ENCODE measurements at regions of chr1 and their contacts with region 1.

Region 1: GRCh38 chr1:51519048-51519864 is at the start of gene EPS15:
- DNase-seq: peak; percentile 95
- ATAC-seq: peak; percentile 85
- total RNA-seq, gene EPS15: 66.1 TPM

Region 2: DNA sequence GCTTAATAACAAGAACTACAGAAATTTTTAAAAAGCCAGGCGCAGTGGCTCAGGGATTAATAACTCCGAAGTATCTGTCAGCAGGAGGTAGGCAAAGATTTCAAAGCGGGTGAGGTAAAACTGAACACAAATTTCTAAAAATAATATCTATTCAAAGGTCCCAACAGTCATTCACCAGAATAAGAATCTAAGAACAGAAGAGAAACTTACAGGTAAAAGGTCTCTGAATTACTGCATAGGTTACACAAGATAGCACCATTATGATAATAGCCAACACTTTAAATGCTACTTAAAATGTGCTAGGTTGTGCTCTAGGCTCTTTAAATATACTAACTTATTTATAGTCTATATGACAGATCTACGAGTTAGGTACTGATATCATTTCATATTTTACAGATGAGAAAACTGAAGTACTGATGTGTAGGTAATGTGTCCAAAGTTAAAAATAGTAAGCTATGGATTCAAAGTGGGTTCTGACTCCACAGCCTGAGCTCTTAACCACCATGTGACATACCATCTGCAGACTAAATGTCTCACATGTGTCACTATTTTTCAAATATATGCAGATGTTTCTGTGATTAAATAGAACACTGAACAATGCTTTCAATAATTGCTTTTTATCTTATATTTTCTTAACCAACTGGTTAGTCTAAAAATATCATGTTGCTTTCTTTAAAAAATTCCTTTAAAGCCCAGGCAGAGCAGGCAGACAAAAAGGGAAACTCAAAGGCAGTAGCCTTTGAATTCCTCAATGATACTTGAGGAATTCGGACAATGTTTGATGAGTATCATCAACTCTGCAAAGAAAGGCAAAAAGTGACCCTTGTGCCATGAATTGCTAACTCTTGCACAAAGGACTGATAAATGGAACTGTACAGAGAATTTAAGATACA is 108.4 kb before region 1 on chr1:
- intact Hi-C with region 1: no loop called
- DNase-seq: no peak
- ATAC-seq: no peak

Region 3: DNA sequence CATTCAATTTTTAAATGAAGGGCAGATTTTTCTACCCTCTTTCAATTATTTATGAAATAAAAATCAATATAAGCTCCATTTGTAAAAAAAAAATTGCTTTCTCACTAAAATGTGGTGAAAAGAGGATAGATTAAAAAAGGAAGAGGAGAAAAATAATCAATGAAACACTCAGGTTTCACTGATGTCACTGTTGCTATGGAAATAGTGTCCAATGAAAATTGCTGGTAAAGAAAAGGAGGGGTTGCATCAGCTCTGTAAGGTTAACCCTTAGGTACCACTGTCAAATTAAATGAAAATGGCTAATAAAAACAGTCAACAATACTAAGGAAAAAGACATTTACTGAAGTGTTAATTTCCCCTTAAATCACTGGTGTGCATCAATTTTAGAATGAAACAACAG is 97.3 kb before region 1 on chr1:
- intact Hi-C with region 1: loop called (anchors 5 kb)
- DNase-seq: no peak
- ATAC-seq: peak; percentile 71

Region 4: GRCh38 chr1:51558360-51558924 is 39.2 kb after region 1 on chr1:
- intact Hi-C with region 1: no loop called
- DNase-seq: no peak
- ATAC-seq: no peak

Region 5: DNA sequence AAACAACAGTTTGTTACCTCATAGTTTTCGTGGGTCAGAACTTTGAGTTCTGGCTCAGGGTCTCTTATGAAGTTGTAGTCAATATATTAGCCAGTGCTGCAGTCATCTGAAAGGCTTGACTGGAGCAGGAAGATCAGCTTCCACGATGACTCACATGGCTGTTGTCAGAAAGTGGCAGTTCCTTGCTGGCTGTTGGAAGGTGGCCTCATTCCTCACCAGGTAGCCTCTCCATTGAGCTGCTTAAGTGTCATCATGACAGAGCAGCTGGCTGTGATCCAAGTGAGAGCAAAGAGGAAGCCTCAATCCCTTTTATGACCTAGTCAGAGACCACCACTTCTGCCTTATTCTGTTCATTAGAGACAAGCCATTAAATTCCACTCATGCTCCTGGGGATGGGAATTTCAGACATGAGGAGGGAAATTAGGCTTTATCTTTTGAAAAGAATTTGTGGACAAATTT is 103.2 kb after region 1 on chr1:
- intact Hi-C with region 1: loop called (anchors 5 kb)
- DNase-seq: no peak
- ATAC-seq: peak; percentile 51

Region 6: DNA sequence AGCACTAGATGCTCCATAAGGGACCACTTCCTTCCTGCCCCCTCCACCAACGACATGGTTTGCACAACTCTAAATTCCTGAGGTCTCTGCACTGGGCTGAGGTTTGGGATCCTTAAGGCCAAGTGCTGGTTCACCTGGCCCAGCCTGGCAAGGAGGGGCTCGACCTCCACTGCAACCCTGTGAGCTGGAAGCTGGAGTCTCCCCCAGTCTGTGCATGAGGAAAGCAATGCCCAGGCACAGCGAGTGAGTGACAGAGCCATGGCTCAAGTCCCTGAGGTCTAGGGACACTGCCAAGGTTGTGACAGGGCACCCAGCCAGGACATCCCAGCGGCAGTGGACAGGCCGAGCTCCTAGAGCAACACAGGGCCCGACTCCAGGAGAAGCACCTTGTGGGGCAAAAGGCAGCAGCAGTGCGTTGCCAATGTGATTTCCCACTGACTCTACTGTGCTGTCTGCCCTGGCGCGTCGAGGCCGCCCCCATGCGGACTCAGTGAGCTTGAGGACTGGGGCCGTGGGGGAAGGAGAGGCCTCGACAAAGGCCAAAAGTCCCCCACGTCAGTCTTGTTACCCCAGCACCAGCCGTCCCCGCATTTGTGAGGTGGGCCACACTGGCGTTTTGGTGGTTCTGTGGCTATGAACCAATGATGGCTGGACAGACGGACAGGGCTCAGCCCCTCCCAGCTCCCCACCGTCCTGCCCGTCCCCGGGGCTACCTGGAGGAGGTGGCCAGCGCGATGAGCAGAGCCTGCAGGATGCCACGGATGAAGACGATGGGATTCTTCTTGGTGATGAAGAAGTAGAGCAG is 1572.8 kb after region 1 on chr1:
- intact Hi-C with region 1: no loop called
- DNase-seq: peak; percentile 78
- ATAC-seq: peak; percentile 68